ENCODE measurements at regions of chr9 and their contacts with region 1.

Region 1: DNA sequence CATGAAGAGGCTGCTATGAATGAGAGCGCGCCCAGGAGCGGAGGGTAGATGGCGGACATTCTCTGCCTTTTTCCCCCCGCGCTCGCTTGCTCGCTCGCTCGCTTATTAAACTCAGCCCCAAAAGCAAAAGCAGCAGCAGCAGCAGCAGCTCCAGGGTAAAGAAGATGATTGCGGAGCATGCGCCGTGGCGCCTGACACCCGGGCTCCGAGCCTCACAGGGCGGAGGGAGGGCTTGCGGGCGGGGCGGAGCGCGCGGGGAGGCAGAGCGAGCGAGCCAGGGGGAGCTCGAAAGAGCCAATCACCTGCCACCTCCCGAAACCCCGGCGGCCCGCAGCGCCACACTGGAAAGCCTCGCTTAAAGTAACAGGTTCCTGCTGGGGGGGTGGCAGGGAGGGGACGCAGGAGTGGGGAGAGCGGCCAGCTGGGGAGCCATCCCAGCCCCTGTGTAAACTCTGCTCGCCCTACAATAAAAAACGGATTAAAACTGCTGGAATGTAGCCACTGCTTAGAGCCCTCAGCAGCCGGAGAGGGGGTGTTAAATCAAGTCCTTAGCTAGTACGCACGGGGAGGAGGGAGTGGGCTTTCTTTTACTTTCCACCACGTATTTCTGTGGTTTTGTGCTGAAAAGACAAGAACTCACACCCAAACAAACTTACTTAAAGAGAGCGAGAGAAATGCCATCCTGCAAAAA is at the start of gene MLLT3:
- DNase-seq: peak; percentile 87
- ATAC-seq: peak; percentile 85
- H3K4me3 ChIP-seq: peak within 1 kb of the TSS; percentile 87
- H3K27ac ChIP-seq: peak within 1 kb of the TSS; percentile 80
- H3K4me1 ChIP-seq: no peaks in the 10 kb centered on the region
- H3K27me3 ChIP-seq: no peaks in the 10 kb centered on the region
- CTCF ChIP-seq: peak in 1 of 3 experiments; percentile 13; a peak in 1 of 6 replicates
- EP300 ChIP-seq: no peak
- POLR2A ChIP-seq: peak; percentile 68
- RAD21 ChIP-seq: peak; percentile 10; the same call in 1 of the 2 replicates
- polyA plus RNA-seq, gene MLLT3: 32.9 to 37.9 TPM

Region 2: GRCh38 chr9:20356403-20357035 is 266.0 kb before region 1 on chr9:
- CTCF ChIA-PET with region 1: interaction called, 13 read pairs
- POLR2A ChIA-PET with region 1: interaction called, 5 read pairs
- RAD21 ChIA-PET with region 1: interaction called, 9 read pairs
- SMC1A ChIA-PET with region 1: interaction called, 17 read pairs
- in situ Hi-C with region 1: loop called (anchors 5 kb)
- intact Hi-C with region 1: loop called (anchors 1 kb)
- DNase-seq: peak; percentile 36
- ATAC-seq: peak; percentile 39
- H3K4me3 ChIP-seq: no peak overlapping the region
- H3K27ac ChIP-seq: no peak overlapping the region
- H3K4me1 ChIP-seq: peaks cover 29% of the 10 kb centered on the region
- H3K27me3 ChIP-seq: no peaks in the 10 kb centered on the region
- CTCF ChIP-seq: peak; percentile 62 to 80 (median 68)
- EP300 ChIP-seq: no peak
- POLR2A ChIP-seq: no peak
- RAD21 ChIP-seq: peak; percentile 97

Region 3: GRCh38 chr9:20552874-20553575 is 69.5 kb before region 1 on chr9:
- CTCF ChIA-PET with region 1: interaction called, 32 read pairs
- POLR2A ChIA-PET with region 1: interaction called, 9 read pairs
- RAD21 ChIA-PET with region 1: interaction called, 41 read pairs
- SMC1A ChIA-PET with region 1: interaction called, 52 read pairs
- in situ Hi-C with region 1: no loop called
- intact Hi-C with region 1: loop called (anchors 2 kb)
- DNase-seq: peak; percentile 38
- ATAC-seq: peak; percentile 67
- H3K4me3 ChIP-seq: peak overlapping the region; percentile 8
- H3K27ac ChIP-seq: peak overlapping the region; percentile 66
- H3K4me1 ChIP-seq: peaks cover 36% of the 10 kb centered on the region
- H3K27me3 ChIP-seq: no peaks in the 10 kb centered on the region
- CTCF ChIP-seq: peak in 1 of 3 experiments; percentile 8; a peak in 2 of 6 replicates
- EP300 ChIP-seq: no peak
- POLR2A ChIP-seq: no peak
- RAD21 ChIP-seq: 0 out of 2 replicates have a peak, but pooled peaks have one; percentile 2

Region 4: GRCh38 chr9:20599195-20599594 is 23.3 kb before region 1 on chr9:
- CTCF ChIA-PET with region 1: interaction called, 25 read pairs
- POLR2A ChIA-PET with region 1: interaction called, 25 read pairs
- RAD21 ChIA-PET with region 1: interaction called, 55 read pairs
- SMC1A ChIA-PET with region 1: interaction called, 68 read pairs
- in situ Hi-C with region 1: no loop called
- intact Hi-C with region 1: no loop called
- DNase-seq: no peak
- ATAC-seq: no peak
- H3K4me3 ChIP-seq: no peak overlapping the region
- H3K27ac ChIP-seq: no peak overlapping the region
- H3K4me1 ChIP-seq: peaks cover 27% of the 10 kb centered on the region
- H3K27me3 ChIP-seq: no peaks in the 10 kb centered on the region
- CTCF ChIP-seq: no peak
- EP300 ChIP-seq: no peak
- POLR2A ChIP-seq: no peak
- RAD21 ChIP-seq: no peak

Region 5: DNA sequence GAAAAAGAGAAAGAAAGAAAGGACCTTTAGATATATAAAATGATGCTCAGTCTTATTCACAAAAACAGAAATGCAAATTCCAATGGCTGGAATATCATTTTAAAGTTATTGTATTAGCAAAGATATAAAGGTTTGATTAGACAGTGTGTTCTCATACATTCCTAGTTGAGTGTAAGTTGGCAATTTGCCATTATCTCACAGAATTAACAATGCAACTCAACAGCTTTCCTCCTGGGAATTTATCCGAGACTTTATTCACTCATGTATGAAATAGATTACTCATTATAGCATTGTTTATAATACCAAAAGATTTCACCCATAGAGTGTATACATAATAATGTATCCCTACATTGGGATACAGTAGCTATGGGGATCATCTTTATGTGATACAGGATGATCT is 26.9 kb after region 1 on chr9:
- CTCF ChIA-PET with region 1: interaction called, 5 read pairs
- POLR2A ChIA-PET with region 1: interaction called, 4 read pairs
- RAD21 ChIA-PET with region 1: interaction called, 19 read pairs
- SMC1A ChIA-PET with region 1: interaction called, 232 read pairs
- in situ Hi-C with region 1: no loop called
- intact Hi-C with region 1: no loop called
- DNase-seq: no peak
- ATAC-seq: no peak
- H3K4me3 ChIP-seq: no peak overlapping the region
- H3K27ac ChIP-seq: no peak overlapping the region
- H3K4me1 ChIP-seq: no peaks in the 10 kb centered on the region
- H3K27me3 ChIP-seq: no peaks in the 10 kb centered on the region
- CTCF ChIP-seq: no peak
- EP300 ChIP-seq: no peak
- POLR2A ChIP-seq: no peak
- RAD21 ChIP-seq: no peak

Region 6: DNA sequence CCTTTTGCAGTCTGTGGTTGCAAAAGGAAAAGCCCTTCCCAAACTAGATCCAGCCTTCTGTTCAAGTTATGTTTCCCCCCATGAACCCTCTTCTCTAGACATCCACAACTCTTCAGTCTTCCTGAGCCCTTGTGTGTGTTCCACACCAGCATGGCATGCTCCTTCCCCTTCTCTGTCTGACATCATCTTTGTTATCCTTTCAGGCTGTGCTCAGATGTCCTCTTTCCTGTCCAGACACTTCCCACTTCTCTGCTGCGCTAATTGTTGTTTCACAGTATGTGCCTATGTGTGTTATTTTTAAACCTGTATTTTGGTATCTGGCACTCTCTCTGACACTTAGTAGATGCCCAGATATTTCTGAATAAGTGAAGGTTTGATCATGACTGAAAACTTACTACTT is 99.7 kb after region 1 on chr9:
- CTCF ChIA-PET with region 1: interaction called, 4 read pairs
- POLR2A ChIA-PET with region 1: no interaction called
- RAD21 ChIA-PET with region 1: interaction called, 3 read pairs
- SMC1A ChIA-PET with region 1: interaction called, 24 read pairs
- in situ Hi-C with region 1: no loop called
- intact Hi-C with region 1: no loop called
- DNase-seq: no peak
- ATAC-seq: no peak
- H3K4me3 ChIP-seq: no peak overlapping the region
- H3K27ac ChIP-seq: no peak overlapping the region
- H3K4me1 ChIP-seq: no peaks in the 10 kb centered on the region; the same call in 1 of the 2 replicates
- H3K27me3 ChIP-seq: no peaks in the 10 kb centered on the region
- CTCF ChIP-seq: no peak
- EP300 ChIP-seq: no peak
- POLR2A ChIP-seq: no peak
- RAD21 ChIP-seq: no peak

Region 7: GRCh38 chr9:20884985-20885593 is 262.6 kb after region 1 on chr9:
- CTCF ChIA-PET with region 1: interaction called, 70 read pairs
- POLR2A ChIA-PET with region 1: interaction called, 4 read pairs
- RAD21 ChIA-PET with region 1: interaction called, 8 read pairs
- SMC1A ChIA-PET with region 1: interaction called, 50 read pairs
- in situ Hi-C with region 1: no loop called
- intact Hi-C with region 1: loop called (anchors 5 kb)
- DNase-seq: peak; percentile 15
- ATAC-seq: peak; percentile 89
- H3K4me3 ChIP-seq: no peak overlapping the region
- H3K27ac ChIP-seq: no peak overlapping the region
- H3K4me1 ChIP-seq: no peaks in the 10 kb centered on the region
- H3K27me3 ChIP-seq: no peaks in the 10 kb centered on the region
- CTCF ChIP-seq: peak; percentile 52 to 56 (median 52)
- EP300 ChIP-seq: no peak
- POLR2A ChIP-seq: no peak
- RAD21 ChIP-seq: peak; percentile 27; the same call in 1 of the 2 replicates

Measured in GM12878 (cell line).